ENCODE measurements at regions of chr22 and their contacts with region 1.

Region 1: DNA sequence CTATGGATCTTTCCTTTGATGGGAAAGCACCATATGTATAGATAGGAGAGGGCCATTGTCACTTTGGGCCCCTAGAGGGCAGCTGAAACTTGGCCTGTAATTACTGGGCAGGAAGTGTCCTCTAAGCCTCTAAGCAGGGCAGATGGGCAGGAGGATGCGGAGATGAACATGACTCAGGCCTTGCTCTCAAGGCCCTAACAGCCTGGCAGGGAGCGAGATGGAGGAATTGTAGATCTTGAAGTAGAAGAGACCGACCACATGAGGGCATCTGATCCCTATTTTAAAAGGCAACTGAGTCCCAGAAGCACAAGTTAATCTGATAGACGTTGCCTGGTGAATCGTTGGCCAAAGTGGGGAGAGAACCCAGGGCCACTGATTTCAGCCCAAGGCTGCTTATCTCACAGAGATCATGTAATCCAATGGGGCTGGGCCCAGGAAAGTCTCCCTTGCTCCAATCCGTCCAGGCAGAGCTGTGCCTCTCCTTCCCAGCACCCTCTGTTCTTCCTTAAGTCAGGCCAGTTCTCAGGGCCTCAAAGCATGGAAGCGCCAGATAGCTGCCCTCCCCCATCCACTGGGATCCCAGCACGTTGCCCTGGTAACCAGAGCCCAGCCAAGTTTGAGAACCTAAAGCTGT is 2.5 kb upstream of the SEPTIN3 start:
- DNase-seq: peak; percentile 76 to 82 (median 80)
- H3K4me3 ChIP-seq: no peak overlapping the region
- H3K27ac ChIP-seq: no peak overlapping the region
- H3K4me1 ChIP-seq: no peaks in the 10 kb centered on the region
- H3K27me3 ChIP-seq: peaks cover 0 to 2% (median 0%) of the 10 kb centered on the region in 5 experiments

Region 2: GRCh38 chr22:42111798-42112197 is 145.1 kb after region 1 on chr22:
- CTCF ChIA-PET with region 1: interaction called, 13 read pairs
- POLR2A ChIA-PET with region 1: no interaction called
- DNase-seq: no peak
- H3K4me3 ChIP-seq: no peak overlapping the region
- H3K27ac ChIP-seq: no peak overlapping the region
- H3K4me1 ChIP-seq: no peaks in the 10 kb centered on the region
- H3K27me3 ChIP-seq: no peaks in the 10 kb centered on the region

Measured in common myeloid progenitor, CD34-positive (primary cell).